ENCODE measurements at regions of chr10 and their contacts with region 1.

Region 1: DNA sequence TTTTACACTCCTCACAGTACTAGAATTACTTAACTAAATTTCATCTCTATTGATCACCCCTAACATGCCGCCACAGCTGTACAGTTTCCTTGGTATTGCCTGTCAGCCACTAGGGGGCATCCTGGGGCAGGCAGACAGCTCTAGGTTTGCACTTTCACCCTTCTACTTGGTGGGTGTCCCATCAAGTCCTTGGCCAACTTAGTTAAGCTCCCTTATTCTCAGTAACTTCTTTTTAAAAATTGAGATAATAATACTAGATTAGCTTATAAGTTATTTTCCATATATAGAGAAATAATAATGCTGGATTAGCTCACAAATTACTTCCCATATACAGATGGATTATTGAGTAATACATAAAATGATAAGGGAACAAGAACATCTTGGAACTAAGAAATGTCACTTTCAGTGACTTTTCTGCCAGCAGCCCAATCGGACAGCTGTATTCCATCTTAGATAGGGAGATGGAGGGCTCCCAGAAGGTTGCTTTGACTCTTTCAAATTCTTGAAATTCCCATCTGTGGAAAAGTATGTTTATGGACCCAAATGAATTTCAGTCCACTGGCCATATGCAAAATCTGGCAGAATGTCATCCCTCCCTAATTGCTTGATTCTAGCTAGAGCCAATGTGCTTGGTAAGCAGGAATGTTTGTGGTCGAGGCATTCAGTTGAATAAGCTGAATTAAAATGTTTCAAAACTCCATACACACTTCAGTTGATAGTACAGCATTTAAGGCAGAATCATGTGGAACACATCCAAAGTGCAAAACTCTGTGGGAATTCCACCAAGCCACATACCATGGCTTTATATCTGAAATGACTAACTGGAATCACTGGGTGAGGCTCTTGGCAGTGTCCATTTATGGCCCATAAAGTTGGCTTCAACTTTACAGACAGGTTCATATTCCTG is 309.7 kb downstream of the CSTF2T start:
- DNase-seq: peak; percentile 53
- H3K4me3 Mint-ChIP-seq: no peak overlapping the region
- H3K27ac Mint-ChIP-seq: no peak overlapping the region
- H3K4me1 Mint-ChIP-seq: no peaks in the 10 kb centered on the region
- H3K27me3 Mint-ChIP-seq: no peaks in the 10 kb centered on the region

Region 2: DNA sequence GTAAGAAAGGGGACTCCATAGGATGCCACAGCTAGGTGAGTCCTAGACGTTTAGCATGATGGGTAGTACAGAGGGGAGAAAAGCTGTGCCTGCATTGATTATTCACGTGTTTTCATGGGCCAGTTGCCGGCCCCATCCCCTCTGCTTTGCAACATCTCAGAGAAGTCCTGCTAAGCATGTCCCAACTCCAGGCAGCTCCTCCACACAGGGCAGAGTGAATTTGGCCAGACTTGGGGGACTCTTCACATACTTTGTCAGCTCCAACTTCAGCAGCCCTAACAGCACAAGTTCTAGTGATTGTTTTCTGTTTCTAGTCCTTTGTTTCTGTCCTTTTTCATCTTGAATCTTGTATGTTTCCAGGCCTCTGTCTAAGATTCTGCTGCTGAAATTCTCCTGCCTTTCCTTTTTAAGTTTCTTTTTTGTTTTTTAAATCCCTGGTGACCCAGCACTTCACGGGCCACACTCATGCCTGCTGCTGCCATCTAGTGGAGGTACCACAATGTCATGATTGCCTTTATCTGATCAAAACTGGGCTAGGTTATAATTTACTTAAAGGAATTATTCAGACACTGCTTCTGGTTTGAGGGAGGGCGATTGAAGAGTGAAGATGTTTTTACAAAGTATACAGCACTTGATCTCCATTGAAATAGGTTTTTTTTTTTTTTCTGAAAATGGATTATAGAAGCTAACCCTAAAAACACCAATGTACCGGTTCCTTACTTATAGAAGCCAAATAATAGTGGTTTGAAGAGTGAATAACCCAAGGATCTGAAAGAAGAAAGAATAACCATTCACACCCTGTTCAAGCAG is 32.8 kb after region 1 on chr10:
- CTCF ChIA-PET with region 1: interaction called, 13 read pairs
- POLR2A ChIA-PET with region 1: no interaction called
- DNase-seq: peak; percentile 41
- H3K4me3 Mint-ChIP-seq: no peak overlapping the region
- H3K27ac Mint-ChIP-seq: no peak overlapping the region
- H3K4me1 Mint-ChIP-seq: no peaks in the 10 kb centered on the region
- H3K27me3 Mint-ChIP-seq: peaks cover 1% of the 10 kb centered on the region

Region 3: DNA sequence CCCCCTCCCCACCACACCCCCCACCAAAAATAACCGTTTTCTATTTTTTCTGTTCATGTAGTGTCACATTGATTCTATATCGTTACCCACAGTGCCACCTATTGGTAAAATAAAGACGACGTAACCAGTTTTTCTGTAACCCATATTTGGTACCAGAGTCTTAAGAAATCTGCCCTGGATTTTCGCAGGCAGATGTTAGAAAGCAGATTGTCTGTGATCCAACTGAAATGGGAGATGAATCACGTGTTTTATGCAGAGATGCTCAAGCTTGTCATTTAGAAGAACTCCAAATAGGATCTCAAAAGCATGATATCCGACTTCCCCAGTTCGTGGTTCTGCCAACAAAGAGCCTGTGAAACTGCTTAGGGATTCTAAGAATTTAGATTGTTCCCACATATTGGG is 570.8 kb after region 1 on chr10:
- CTCF ChIA-PET with region 1: interaction called, 30 read pairs
- POLR2A ChIA-PET with region 1: no interaction called
- DNase-seq: no peak
- H3K4me3 Mint-ChIP-seq: no peak overlapping the region
- H3K27ac Mint-ChIP-seq: no peak overlapping the region
- H3K4me1 Mint-ChIP-seq: no peaks in the 10 kb centered on the region
- H3K27me3 Mint-ChIP-seq: peaks cover 13% of the 10 kb centered on the region